ENCODE measurements at regions of chr1 and their contacts with region 1.

Region 1: DNA sequence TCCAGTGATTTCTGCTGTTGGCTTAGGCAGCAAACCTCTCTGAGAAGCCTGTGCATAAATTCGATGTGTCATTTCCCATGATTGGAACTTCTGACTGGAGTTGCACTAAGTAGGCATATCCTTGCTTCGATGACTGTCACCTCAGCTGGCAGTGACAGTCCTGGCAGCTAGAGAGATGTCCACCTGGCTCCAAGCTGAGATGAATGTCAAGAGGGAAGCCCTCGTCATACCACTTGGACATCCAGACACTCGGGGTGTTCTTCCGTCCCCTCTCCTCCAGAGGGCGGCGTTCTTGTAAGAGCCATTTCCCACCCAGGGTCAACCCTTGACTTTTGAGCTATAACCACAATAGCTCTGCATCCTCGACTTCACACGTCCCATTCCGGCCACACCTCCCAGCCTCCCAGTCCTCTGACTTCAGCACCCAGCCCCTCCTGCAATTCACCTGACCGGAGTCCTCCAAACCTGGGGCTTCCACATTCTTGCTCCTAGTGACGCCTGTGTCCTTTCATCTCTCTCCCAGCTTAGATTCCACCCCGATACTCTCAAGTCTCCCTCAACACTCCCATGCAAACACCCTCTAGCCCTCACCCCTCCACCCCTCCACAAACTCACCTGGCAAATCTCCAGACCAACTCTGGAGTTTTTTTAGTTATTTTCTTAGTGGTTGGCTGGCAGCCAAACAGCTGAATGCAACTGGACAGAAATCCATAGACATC is 17.3 kb downstream of the CA6 start:
- DNase-seq: peak; percentile 84
- ATAC-seq: peak; percentile 50
- H3K4me3 Mint-ChIP-seq: peak overlapping the region; percentile 93
- H3K27ac Mint-ChIP-seq: peak overlapping the region; percentile 92
- H3K4me1 Mint-ChIP-seq: peaks cover 79% of the 10 kb centered on the region
- H3K27me3 Mint-ChIP-seq: no peaks in the 10 kb centered on the region
- CTCF ChIP-seq: peak; percentile 70

Region 2: DNA sequence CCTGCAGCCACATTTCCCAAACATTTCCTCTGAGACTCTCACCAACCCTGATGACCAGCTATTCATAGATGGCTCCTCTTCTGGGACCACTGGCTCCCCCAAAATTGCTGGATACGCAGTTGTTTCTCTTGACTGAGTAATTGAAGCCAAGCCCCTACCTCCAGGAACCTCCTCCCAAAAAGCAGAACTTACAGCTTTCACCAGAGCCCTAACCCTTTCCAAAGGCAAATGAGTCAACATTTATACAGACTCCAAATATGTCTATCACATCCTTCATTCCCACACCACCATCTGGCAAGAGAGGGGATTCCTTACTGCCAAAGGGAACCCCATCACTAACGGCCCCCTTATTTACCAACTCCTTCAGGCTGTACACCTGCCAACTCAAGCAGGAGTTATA is 37.6 kb before region 1 on chr1:
- CTCF ChIA-PET with region 1: interaction called, 29 read pairs
- POLR2A ChIA-PET with region 1: interaction called, 199 read pairs
- intact Hi-C with region 1: loop called (anchors 5 kb)
- DNase-seq: no peak
- ATAC-seq: no peak
- H3K4me3 Mint-ChIP-seq: no peak overlapping the region
- H3K27ac Mint-ChIP-seq: no peak overlapping the region
- H3K4me1 Mint-ChIP-seq: peaks cover 28% of the 10 kb centered on the region
- H3K27me3 Mint-ChIP-seq: no peaks in the 10 kb centered on the region
- CTCF ChIP-seq: no peak

Region 3: GRCh38 chr1:8941906-8942305 is 21.1 kb before region 1 on chr1:
- CTCF ChIA-PET with region 1: interaction called, 74 read pairs
- POLR2A ChIA-PET with region 1: interaction called, 48 read pairs
- intact Hi-C with region 1: no loop called
- DNase-seq: no peak
- ATAC-seq: peak; percentile 54
- H3K4me3 Mint-ChIP-seq: no peak overlapping the region
- H3K27ac Mint-ChIP-seq: peak overlapping the region; percentile 98
- H3K4me1 Mint-ChIP-seq: peaks cover 89% of the 10 kb centered on the region
- H3K27me3 Mint-ChIP-seq: no peaks in the 10 kb centered on the region
- CTCF ChIP-seq: no peak

Region 4: DNA sequence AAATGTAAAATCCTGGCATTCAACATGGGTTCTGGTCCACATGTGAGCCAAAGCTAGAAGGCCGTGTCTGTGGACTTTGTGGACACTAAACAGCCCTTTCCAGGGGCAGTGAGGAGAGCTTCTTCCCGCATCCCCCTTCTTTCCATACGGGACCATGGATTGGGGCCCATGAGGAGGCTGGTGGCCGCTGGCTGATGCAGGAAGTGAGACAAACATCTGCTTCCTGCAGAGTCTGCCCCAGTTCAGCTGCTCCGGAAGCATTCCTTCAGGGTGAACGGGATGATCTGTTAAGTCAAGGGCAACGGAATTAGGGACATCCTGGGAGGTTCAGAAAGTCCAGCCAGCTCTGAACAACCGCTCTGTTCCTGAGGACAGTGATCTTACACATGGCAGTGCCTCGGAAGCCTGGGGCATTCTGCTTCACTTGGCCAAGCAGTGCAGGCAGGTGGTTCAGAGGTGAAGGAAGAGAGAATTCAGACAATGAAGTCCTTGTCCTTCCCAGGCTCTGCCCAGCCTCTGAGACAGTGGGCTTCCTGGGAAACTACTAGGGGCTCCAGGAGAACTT is 15.8 kb before region 1 on chr1:
- CTCF ChIA-PET with region 1: interaction called, 74 read pairs
- POLR2A ChIA-PET with region 1: interaction called, 48 read pairs
- intact Hi-C with region 1: no loop called
- DNase-seq: no peak
- ATAC-seq: peak; percentile 9
- H3K4me3 Mint-ChIP-seq: peak overlapping the region; percentile 50
- H3K27ac Mint-ChIP-seq: peak overlapping the region; percentile 98
- H3K4me1 Mint-ChIP-seq: peaks cover 76% of the 10 kb centered on the region
- H3K27me3 Mint-ChIP-seq: no peaks in the 10 kb centered on the region
- CTCF ChIP-seq: no peak